ENCODE measurements at regions of chr12 and their contacts with region 1.

Region 1: GRCh38 chr12:94101738-94102660 is 46.4 kb upstream of the PLXNC1 start:
- DNase-seq: peak; percentile 91
- ATAC-seq: peak; percentile 77
- H3K4me3 Mint-ChIP-seq: peak overlapping the region; percentile 76
- H3K27ac Mint-ChIP-seq: peak overlapping the region; percentile 62
- H3K4me1 Mint-ChIP-seq: peaks cover 30% of the 10 kb centered on the region
- H3K27me3 Mint-ChIP-seq: peaks cover 5% of the 10 kb centered on the region

Region 2: DNA sequence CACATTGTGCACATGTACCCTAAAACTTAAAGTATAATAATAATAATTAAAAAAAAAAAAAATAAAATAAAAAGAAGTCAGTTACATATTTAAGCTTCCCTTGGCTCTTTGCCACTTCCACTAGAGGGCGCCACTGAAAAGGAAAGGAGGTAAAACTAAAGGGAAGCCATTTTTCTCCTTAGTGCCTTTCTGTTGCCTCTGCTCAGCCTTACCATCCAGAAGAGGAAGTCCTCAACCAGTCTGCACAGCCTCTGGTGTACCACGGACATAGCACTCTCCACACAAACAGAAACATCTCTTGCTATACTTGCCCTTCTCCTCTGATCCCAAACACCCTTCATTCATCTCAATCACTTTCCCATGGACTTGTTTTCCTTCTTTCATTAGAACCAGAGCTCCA is 1003.9 kb before region 1 on chr12:
- CTCF ChIA-PET with region 1: no interaction called
- POLR2A ChIA-PET with region 1: no interaction called
- intact Hi-C with region 1: loop called in 1 of 2 experiments (anchors 10 kb)
- DNase-seq: peak; percentile 84
- ATAC-seq: peak; percentile 87
- H3K4me3 Mint-ChIP-seq: no peak overlapping the region
- H3K27ac Mint-ChIP-seq: peak overlapping the region; percentile 51
- H3K4me1 Mint-ChIP-seq: peaks cover 21% of the 10 kb centered on the region
- H3K27me3 Mint-ChIP-seq: peaks cover 3% of the 10 kb centered on the region

Region 3: GRCh38 chr12:93297032-93297431 is 805.0 kb before region 1 on chr12:
- CTCF ChIA-PET with region 1: no interaction called
- POLR2A ChIA-PET with region 1: no interaction called
- intact Hi-C with region 1: no loop called
- DNase-seq: no peak
- ATAC-seq: no peak
- H3K4me3 Mint-ChIP-seq: no peak overlapping the region
- H3K27ac Mint-ChIP-seq: no peak overlapping the region
- H3K4me1 Mint-ChIP-seq: peaks cover 4% of the 10 kb centered on the region
- H3K27me3 Mint-ChIP-seq: no peaks in the 10 kb centered on the region

Region 4: GRCh38 chr12:93514853-93515252 is 587.1 kb before region 1 on chr12:
- CTCF ChIA-PET with region 1: interaction called, 10 read pairs
- POLR2A ChIA-PET with region 1: no interaction called
- intact Hi-C with region 1: no loop called
- DNase-seq: no peak
- ATAC-seq: no peak
- H3K4me3 Mint-ChIP-seq: no peak overlapping the region
- H3K27ac Mint-ChIP-seq: no peak overlapping the region
- H3K4me1 Mint-ChIP-seq: no peaks in the 10 kb centered on the region
- H3K27me3 Mint-ChIP-seq: no peaks in the 10 kb centered on the region

Region 5: DNA sequence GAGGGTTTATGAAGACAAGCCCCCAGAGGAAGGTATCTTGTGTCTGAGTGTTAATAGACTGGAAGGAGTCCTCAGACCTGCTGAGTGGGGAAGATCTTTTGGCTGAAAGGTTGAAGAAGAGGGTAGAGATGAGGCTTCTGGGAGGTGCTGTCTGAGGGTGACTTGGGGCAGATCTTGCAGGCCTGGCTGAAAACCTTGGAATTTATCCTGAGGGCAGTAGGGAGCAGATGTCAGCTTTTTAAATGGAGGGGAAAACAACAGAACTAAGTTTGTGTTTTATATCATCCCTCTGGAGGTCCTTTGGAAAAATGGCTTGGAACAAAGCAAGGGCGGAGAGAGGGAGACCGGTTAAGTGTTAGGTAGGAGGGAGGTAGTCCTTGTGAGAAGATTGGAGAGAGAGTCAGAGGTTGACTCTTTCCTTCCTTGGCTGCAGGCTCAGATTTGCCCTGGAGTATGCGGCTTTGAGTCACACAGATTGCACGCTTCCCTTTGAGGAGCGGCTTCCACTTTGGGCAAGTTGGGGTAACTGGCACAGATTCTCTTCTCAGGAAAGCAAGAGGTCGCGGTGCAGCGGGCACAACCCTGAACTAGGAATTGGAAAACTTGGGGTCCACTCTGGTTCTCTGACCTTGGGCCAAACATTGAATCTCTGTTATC is 519.8 kb before region 1 on chr12:
- CTCF ChIA-PET with region 1: interaction called, 13 read pairs
- POLR2A ChIA-PET with region 1: no interaction called
- intact Hi-C with region 1: no loop called
- DNase-seq: no peak
- ATAC-seq: no peak
- H3K4me3 Mint-ChIP-seq: no peak overlapping the region
- H3K27ac Mint-ChIP-seq: no peak overlapping the region
- H3K4me1 Mint-ChIP-seq: peaks cover 2% of the 10 kb centered on the region
- H3K27me3 Mint-ChIP-seq: peaks cover 2% of the 10 kb centered on the region

Region 6: GRCh38 chr12:93979189-93979588 is 122.8 kb before region 1 on chr12:
- CTCF ChIA-PET with region 1: interaction called, 42 read pairs
- POLR2A ChIA-PET with region 1: no interaction called
- intact Hi-C with region 1: loop called (anchors 1 kb)
- DNase-seq: peak; percentile 43
- ATAC-seq: no peak
- H3K4me3 Mint-ChIP-seq: no peak overlapping the region
- H3K27ac Mint-ChIP-seq: no peak overlapping the region
- H3K4me1 Mint-ChIP-seq: peaks cover 22% of the 10 kb centered on the region
- H3K27me3 Mint-ChIP-seq: peaks cover 12% of the 10 kb centered on the region

Region 7: GRCh38 chr12:94074980-94075928 is 26.7 kb before region 1 on chr12:
- CTCF ChIA-PET with region 1: interaction called, 87 read pairs
- POLR2A ChIA-PET with region 1: interaction called, 6 read pairs
- intact Hi-C with region 1: no loop called
- DNase-seq: peak; percentile 46
- ATAC-seq: peak; percentile 85
- H3K4me3 Mint-ChIP-seq: no peak overlapping the region
- H3K27ac Mint-ChIP-seq: peak overlapping the region; percentile 4
- H3K4me1 Mint-ChIP-seq: peaks cover 22% of the 10 kb centered on the region
- H3K27me3 Mint-ChIP-seq: peaks cover 6% of the 10 kb centered on the region

Region 8: GRCh38 chr12:94305130-94305957 is 203.3 kb after region 1 on chr12:
- CTCF ChIA-PET with region 1: no interaction called
- POLR2A ChIA-PET with region 1: no interaction called
- intact Hi-C with region 1: no loop called
- DNase-seq: peak; percentile 68
- ATAC-seq: peak; percentile 93
- H3K4me3 Mint-ChIP-seq: peak overlapping the region; percentile 5
- H3K27ac Mint-ChIP-seq: peak overlapping the region; percentile 70
- H3K4me1 Mint-ChIP-seq: peaks cover 30% of the 10 kb centered on the region
- H3K27me3 Mint-ChIP-seq: no peaks in the 10 kb centered on the region